Right ventricle myocardium inferior (tissue), 1 donor: ENCODE measurements at regions of chr3 and their contacts with region 1.

Region 1: DNA sequence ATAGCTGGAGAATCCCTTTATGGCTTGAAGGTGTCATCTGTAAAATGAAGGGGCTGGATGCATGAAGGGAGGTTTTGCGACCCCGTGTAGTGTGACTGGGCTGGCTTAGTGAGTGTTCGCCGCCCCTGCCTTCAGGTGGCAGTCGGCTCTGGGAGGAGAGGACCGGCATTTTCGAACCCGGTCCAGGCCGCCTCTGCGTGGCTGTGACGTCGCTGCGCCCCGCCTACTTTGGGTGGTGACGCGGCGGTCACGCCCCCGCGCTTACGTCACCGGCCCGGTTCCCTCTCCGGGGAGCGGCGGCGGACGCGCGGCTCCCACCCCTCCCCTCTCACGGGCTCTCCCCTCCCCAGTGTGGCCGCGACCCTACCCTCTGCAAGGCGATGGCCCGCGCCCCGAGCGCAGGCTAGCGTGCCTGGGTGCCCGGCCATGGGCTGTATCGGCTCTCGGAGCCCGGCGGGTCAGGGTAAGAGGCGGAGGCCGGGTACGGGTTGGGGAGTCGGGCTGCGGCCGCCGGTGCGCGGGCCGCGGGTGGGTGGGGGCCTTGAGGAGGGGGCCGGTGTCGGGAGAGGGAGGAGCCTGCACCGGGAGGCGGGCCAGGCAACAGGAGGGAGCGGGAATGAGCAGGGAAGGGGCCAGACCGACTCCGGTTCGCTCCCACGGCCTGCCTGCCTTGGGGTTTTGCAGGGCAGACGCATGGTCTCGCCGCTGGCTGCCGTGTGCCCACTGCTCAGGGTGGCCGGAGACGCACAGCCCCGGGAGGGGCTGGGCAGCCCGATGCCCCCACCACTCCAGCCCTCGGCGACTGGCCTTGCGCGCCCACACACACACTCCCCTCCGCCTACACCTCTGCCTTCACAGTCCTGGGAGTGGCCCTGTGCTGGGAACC is 1.5 kb upstream of the FAM131A start:
- DNase-seq: peak; percentile 95
- ATAC-seq: peak; percentile 64

Region 2: DNA sequence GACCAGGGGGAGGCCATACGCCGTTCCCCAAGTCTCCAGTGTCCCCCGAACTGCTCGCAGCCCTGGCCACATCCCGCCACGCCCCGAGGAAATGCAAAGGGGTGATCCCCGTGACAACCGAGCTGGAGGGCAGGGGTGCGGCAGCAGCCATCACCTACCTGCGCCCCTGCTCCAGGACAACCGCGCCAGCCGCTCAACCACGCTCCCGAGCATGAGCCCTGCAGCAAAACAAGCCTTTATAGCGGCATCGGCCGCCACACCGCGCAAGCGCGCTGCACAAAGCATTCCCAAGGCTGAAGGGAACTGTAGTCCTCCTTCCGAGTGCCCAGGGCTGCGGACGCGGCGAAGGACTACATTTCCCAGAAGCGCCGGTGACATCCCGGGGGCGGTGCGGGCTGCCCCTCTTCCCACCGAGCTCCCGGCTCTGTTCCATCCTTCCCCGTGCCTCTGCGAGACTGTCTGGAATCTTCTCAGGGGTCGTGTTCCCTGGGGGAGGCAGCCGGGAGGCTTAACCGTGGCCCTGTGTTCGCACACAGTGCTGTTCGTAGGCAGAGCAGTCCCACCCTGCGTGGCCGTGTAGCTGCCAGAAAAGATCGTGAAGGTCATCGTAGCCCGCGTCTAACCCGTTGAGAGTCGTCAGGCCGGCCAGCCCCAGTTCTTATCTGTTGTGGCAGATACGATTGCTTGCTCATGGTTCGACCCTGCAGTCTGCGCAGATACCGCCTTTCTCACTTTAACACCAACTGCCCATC is 318.1 kb before region 1 on chr3 and contains the start of gene ABCC5:
- intact Hi-C with region 1: loop called (anchors 10 kb)
- DNase-seq: peak; percentile 97
- ATAC-seq: peak; percentile 99
- total RNA-seq, gene ABCC5: 48.2 TPM

Region 3: DNA sequence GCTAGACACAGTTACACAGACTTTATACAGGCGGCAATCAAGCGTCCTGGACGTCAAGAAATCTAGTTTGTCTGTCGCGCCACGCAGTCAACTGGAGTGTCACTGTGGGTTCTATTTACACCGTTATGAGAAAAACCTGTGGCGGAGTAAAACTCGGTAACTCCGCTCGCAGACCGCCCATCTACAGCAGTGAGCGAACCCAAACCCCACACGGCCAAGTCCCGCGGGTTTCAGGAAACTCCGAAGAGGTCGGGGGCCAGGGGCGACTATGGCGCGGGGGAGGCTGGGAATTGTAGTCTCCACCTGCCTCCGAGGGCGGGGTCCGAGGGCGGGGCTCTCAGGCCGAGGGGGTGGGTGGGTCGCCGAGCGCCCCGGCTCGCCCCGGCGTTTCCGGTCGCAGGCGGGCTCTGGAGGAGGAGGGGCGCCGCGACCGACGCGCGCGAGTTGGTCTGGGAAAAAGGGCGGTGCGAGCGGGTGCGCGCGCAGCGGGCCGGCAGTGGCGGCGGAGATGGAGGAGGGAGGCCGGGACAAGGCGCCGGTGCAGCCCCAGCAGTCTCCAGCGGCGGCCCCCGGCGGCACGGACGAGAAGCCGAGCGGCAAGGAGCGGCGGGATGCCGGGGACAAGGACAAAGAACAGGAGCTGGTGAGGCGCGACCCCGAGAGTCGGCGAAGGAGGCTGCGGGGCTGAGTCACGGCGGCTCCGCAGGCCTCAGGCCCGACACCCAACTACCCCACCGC is 37.0 kb before region 1 on chr3 and contains the start of gene PSMD2:
- intact Hi-C with region 1: no loop called
- DNase-seq: peak; percentile 99
- ATAC-seq: peak; percentile 99
- total RNA-seq, gene PSMD2: 228 TPM

Region 4: GRCh38 chr3:184320099-184320445 is 15.8 kb before region 1 on chr3:
- intact Hi-C with region 1: loop called (anchors 2 kb)
- DNase-seq: peak; percentile 98
- ATAC-seq: peak; percentile 92

Region 5: GRCh38 chr3:184391266-184391665 is 55.4 kb after region 1 on chr3:
- intact Hi-C with region 1: no loop called
- DNase-seq: no peak
- ATAC-seq: no peak